ENCODE measurements at regions of chr10 and their contacts with region 1.

Region 1: DNA sequence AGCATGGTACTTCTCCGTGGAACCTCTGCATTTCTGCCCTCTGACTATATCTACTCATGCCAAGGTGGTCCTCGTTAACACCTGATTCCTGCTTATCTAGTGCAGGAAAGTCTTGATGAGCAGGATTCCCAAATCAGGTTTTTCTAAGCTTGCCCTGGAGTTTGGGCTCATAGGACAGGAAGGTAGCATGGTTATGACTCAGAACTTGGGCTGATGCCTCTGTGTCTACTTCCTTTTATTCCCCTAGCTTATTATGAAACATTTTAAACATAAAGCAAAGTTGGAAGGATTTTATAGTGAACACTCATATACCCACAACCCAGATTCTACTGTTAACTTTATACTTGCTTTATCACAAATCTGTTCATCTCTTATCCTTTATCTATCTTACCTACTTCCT is 5.6 kb downstream of the SUFU start:
- DNase-seq: no peak
- ATAC-seq: no peak
- H3K4me3 ChIP-seq: no peak overlapping the region
- H3K27ac ChIP-seq: peak overlapping the region; percentile 15
- H3K4me1 ChIP-seq: peaks cover 39% of the 10 kb centered on the region
- H3K27me3 ChIP-seq: no peaks in the 10 kb centered on the region
- CTCF ChIP-seq: no peak

Region 2: GRCh38 chr10:102131690-102132089 is 377.7 kb before region 1 on chr10:
- intact Hi-C with region 1: no loop called
- DNase-seq: no peak
- ATAC-seq: no peak
- H3K4me3 ChIP-seq: no peak overlapping the region
- H3K27ac ChIP-seq: no peak overlapping the region
- H3K4me1 ChIP-seq: peaks cover 25% of the 10 kb centered on the region
- H3K27me3 ChIP-seq: no peaks in the 10 kb centered on the region
- CTCF ChIP-seq: no peak

Region 3: DNA sequence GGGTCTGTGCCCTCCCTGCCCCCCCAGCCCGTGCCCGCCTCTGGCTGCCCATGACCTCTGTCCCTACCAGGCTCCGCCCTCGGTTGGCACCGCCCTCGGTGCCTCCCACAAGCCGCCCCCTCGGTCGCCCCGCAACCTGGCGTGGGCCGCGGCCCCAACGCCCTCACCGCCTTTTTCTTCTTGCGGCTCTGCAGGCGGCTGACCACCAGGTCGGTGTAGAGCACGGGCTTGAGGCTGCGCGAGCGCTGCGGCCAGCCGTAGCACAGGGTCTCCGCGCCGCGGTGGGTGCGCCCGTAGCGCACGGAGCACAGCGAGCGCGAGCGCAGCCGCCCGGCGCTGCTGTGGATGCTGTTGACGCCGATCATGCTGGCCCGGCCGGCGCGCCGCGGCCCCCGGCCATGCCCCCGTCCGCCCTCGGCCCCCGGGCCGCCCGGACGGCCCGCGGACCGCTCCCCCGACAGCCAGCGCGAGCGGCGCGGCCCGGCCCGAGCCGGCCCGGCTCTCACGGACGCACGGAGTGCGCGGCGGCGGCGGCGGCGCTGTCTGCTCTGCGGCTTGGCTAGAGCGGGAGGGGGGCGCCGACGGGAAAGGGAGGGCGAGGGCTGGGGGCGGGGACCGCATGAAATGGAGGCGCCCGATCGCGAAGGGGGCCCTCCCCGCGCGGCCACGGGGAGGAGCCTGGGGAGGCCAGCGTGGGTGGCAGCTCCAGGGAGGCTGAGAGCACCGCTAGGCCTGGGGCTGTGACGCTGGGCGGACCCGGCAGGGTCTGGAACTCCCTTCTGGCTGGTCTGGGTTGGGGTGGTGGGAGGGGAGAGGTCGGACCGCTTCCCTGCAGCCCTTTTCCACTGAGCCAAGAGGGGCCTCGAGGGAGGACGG is 100.4 kb before region 1 on chr10:
- intact Hi-C with region 1: no loop called
- DNase-seq: no peak
- ATAC-seq: peak in 3 of 4 donors; percentile 7 to 39 (median 8)
- H3K4me3 ChIP-seq: peak overlapping the region; percentile 53
- H3K27ac ChIP-seq: no peak overlapping the region
- H3K4me1 ChIP-seq: peaks cover 4% of the 10 kb centered on the region
- H3K27me3 ChIP-seq: peaks cover 0 to 62% (median 33%) of the 10 kb centered on the region in 3 donors
- CTCF ChIP-seq: no peak

Region 4: DNA sequence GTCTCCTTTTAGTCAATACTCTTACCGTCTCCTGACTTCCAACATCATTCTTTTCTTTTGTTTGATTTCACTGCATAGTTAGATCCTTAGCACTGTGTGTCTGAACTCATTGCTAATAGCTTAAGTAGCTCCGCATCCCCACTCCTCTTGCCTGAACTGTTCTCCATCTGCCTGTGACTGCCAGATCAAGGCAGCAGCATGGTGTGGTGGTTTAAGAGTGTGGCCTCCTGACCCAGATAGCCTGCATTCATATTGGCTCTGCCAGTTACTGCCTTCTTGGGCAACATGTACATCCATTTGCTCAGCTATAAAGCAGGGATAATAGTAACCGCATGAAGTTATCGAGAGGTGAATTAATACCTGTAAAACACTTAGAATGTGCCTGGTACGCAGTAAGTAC is 45.1 kb after region 1 on chr10:
- intact Hi-C with region 1: loop called in 1 of 2 experiments (anchors 5 kb)
- DNase-seq: no peak
- ATAC-seq: peak in 1 of 4 donors; percentile 42
- H3K4me3 ChIP-seq: no peak overlapping the region
- H3K27ac ChIP-seq: no peak overlapping the region
- H3K4me1 ChIP-seq: peaks cover 21% of the 10 kb centered on the region
- H3K27me3 ChIP-seq: no peaks in the 10 kb centered on the region
- CTCF ChIP-seq: no peak

Region 5: DNA sequence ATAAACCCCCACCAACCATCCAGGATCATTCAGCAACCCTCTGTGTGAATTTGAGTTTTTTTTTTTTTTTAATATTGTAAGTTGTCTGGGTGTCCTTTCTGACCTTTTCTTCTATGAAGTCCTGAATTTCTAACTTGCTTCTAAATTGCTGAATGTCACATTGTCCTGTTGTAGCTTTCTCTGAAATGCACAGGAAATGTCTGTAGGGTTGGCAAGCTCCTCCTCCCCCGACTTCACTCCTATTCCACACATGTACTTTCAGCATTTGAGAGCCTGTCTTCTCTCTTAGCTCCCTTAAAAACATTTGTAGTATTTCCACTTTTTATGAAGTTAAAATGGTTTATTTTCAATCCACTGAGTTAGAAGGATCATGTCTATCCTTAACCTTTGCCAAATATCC is 405.4 kb after region 1 on chr10:
- intact Hi-C with region 1: no loop called
- DNase-seq: no peak
- ATAC-seq: no peak
- H3K4me3 ChIP-seq: no peak overlapping the region
- H3K27ac ChIP-seq: no peak overlapping the region
- H3K4me1 ChIP-seq: peaks cover 12% of the 10 kb centered on the region
- H3K27me3 ChIP-seq: no peaks in the 10 kb centered on the region
- CTCF ChIP-seq: no peak